ENCODE measurements at regions of chr20 and their contacts with region 1.

Region 1: DNA sequence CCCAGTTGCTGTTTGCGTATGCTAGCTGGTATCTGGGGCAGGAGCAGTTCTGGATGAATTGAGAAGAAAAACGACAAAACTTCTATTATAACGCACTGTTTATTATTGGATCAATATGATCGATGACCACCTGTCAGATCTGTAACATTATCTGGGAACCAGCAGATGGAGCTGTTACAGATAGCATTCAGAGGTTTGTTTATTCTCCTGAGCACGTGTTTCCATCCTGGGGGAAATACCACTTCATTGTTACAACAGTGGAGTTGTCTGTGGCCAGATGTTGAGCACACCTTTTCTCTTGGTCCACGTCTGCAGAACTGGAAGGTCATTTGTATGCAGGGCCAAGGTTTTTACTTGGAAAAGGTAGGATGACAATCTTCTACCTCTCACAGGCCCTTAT is 16.0 kb upstream of the NKX2-2 start:
- DNase-seq: peak in 2 of 14 experiments; percentile 55 to 57
- ATAC-seq: no peak
- H3K4me3 ChIP-seq: no peak overlapping the region
- H3K4me3 Mint-ChIP-seq: no peak overlapping the region
- H3K27ac ChIP-seq: no peak overlapping the region
- H3K27ac Mint-ChIP-seq: no peak overlapping the region
- H3K4me1 ChIP-seq: no peaks in the 10 kb centered on the region
- H3K4me1 Mint-ChIP-seq: peaks cover 5% of the 10 kb centered on the region
- H3K27me3 ChIP-seq: peaks cover 14 to 20% of the 10 kb centered on the region in 2 experiments
- H3K27me3 Mint-ChIP-seq: peaks cover 42% of the 10 kb centered on the region
- CTCF ChIP-seq: peak; percentile 73

Region 2: DNA sequence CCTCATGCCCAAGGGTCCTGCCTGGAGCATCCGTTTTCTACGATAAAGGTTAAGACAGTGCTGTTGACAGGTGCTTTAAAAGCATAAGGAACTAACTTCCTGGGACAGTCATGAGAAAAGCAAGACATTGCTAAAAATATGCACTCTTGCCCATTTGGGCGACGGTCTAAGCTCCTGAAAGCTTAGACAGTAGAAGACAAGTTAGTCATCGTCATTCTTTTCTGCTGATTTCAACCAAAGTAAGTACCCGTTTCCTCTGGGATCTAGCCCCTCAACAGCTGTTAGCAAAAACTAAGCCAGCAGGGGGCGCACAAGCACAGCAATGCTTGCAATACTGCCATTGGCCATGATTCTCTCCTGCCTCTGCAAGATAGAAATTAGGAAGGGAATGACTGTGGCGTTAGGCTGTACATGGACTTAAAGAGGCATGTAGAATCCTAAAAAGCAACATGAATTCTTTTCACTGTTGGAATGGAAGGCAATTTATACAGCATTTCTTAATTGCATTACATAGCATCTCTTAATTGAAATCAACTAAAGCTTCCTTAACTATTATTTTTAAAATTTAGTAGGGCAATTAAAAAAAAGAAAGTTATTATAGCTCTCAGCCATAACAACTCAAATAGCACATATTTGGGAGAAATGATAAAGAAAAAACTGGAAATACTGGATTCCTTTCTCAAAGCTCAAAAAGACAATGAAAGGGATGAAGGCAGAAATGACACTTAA is 669.6 kb before region 1 on chr20:
- CTCF ChIA-PET with region 1: no interaction called
- POLR2A ChIA-PET with region 1: no interaction called
- intact Hi-C with region 1: no loop called
- DNase-seq: peak; percentile 67 to 87 (median 79)
- ATAC-seq: peak; percentile 60
- H3K4me3 ChIP-seq: no peak overlapping the region
- H3K4me3 Mint-ChIP-seq: no peak overlapping the region
- H3K27ac ChIP-seq: no peak overlapping the region
- H3K27ac Mint-ChIP-seq: no peak overlapping the region
- H3K4me1 ChIP-seq: no peaks in the 10 kb centered on the region
- H3K4me1 Mint-ChIP-seq: no peaks in the 10 kb centered on the region
- H3K27me3 ChIP-seq: peaks cover 0 to 8% of the 10 kb centered on the region in 2 experiments
- H3K27me3 Mint-ChIP-seq: peaks cover 18% of the 10 kb centered on the region
- CTCF ChIP-seq: peak; percentile 91

Region 3: DNA sequence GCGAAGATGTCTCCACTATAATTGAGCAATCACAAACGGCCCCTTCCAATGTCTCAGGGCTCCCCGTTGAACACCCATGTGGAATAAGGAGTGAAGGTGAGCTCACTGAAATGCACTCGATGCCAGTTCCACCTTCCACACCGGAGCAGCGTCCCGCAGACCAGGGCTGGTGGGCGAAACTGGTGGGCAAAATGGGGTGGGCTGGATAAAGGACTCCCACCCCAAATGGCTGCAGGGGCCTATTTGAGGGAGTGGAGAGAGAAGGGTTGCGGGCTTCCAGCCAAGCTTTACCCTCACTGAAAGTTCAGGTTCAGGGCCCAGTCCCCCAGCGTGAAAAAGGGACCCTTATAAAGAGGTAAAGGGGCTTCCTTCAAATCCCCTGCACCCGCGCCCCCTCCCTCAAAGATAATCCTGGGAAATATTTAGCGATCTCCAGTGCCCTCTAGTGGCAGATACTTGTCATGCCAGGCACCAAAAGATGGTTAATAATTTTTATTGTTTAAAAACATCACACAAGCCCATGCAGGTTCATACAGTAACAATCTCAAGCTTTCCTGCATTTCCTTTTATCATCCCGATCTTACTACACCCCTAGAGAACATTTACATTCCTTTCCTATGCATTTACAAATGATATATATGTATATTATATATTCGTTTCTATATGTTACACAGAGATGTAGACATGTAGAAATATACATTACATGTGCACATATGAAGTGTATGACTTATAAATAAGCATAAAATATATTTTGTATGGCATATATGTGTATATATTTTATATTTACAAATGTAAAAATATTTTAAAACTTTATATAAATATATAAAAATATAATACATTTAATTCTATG is 42.2 kb after region 1 on chr20:
- CTCF ChIA-PET with region 1: interaction called, 10 read pairs
- POLR2A ChIA-PET with region 1: interaction called, 7 read pairs
- intact Hi-C with region 1: loop called (anchors 1 kb)
- DNase-seq: peak in 7 of 14 experiments; percentile 3 to 59 (median 15)
- ATAC-seq: no peak
- H3K4me3 ChIP-seq: no peak overlapping the region
- H3K4me3 Mint-ChIP-seq: no peak overlapping the region
- H3K27ac ChIP-seq: no peak overlapping the region
- H3K27ac Mint-ChIP-seq: no peak overlapping the region
- H3K4me1 ChIP-seq: peaks cover 8% of the 10 kb centered on the region
- H3K4me1 Mint-ChIP-seq: no peaks in the 10 kb centered on the region
- H3K27me3 ChIP-seq: no peaks in the 10 kb centered on the region
- H3K27me3 Mint-ChIP-seq: peaks cover 34% of the 10 kb centered on the region
- CTCF ChIP-seq: peak; percentile 86

Region 4: GRCh38 chr20:22490287-22491193 is 960.7 kb after region 1 on chr20:
- CTCF ChIA-PET with region 1: no interaction called
- POLR2A ChIA-PET with region 1: no interaction called
- intact Hi-C with region 1: no loop called
- DNase-seq: no peak
- ATAC-seq: no peak
- H3K4me3 ChIP-seq: no peak overlapping the region
- H3K4me3 Mint-ChIP-seq: no peak overlapping the region
- H3K27ac ChIP-seq: no peak overlapping the region
- H3K27ac Mint-ChIP-seq: no peak overlapping the region
- H3K4me1 ChIP-seq: no peaks in the 10 kb centered on the region
- H3K4me1 Mint-ChIP-seq: no peaks in the 10 kb centered on the region
- H3K27me3 ChIP-seq: no peaks in the 10 kb centered on the region
- H3K27me3 Mint-ChIP-seq: peaks cover 4% of the 10 kb centered on the region
- CTCF ChIP-seq: no peak

Measured in CD4-positive, alpha-beta T cell (primary cell).